ENCODE measurements at regions of chr6 and their contacts with region 1.

Region 1: DNA sequence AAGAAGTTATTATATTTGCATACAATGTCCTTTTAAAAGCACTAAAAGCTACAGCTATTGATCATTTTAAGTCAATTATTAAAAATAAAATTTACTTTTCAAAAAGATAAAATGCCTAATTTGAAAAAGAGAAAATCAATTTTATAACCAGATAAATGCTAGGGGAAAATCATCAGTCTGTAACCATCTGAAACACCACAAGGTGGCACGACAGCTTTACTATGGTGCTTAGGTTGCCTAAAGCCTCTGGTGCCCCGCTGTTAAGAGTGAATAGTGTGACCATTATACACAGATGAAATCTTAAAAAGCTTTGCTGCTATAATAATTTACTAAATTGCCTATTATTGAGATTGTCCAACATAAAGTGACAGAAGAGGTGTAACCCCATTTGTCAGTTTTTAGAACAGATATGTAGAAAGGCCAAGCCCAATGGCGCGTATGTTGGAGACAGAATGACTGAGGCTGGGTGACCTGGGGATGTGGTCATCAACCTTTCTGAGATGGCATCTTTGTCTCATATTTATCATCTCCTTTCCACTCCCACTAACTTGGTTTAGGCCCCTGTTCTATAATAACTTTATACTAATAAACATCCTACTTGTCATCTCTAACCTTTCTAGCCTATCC is 100.8 kb downstream of the MOXD1 start:
- DNase-seq: no peak
- H3K4me3 Mint-ChIP-seq: no peak overlapping the region
- H3K27ac Mint-ChIP-seq: no peak overlapping the region
- H3K4me1 Mint-ChIP-seq: no peaks in the 10 kb centered on the region
- H3K27me3 Mint-ChIP-seq: peaks cover 19% of the 10 kb centered on the region

Region 2: DNA sequence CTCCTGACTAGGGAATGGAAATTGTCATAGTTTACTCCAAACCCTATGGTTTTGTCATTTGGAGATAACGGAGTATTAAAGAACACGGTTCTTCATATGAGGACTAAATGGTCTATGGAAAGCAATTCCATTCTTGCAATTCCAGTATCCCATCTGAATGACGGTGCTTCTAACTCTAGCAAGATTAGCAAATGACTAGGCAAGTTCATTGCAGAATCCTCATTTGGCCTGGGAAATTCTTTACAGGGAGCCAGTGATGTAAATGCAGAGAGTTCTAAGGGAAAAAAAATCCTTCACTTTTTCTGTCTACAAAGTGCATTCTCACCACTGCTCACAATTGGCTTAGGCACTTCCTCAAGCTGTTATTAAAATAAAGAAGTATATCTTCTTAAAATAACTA is 10.7 kb before region 1 on chr6:
- CTCF ChIA-PET with region 1: interaction called, 14 read pairs
- POLR2A ChIA-PET with region 1: no interaction called
- DNase-seq: no peak
- H3K4me3 Mint-ChIP-seq: no peak overlapping the region
- H3K27ac Mint-ChIP-seq: no peak overlapping the region
- H3K4me1 Mint-ChIP-seq: no peaks in the 10 kb centered on the region
- H3K27me3 Mint-ChIP-seq: peaks cover 17% of the 10 kb centered on the region

Region 3: DNA sequence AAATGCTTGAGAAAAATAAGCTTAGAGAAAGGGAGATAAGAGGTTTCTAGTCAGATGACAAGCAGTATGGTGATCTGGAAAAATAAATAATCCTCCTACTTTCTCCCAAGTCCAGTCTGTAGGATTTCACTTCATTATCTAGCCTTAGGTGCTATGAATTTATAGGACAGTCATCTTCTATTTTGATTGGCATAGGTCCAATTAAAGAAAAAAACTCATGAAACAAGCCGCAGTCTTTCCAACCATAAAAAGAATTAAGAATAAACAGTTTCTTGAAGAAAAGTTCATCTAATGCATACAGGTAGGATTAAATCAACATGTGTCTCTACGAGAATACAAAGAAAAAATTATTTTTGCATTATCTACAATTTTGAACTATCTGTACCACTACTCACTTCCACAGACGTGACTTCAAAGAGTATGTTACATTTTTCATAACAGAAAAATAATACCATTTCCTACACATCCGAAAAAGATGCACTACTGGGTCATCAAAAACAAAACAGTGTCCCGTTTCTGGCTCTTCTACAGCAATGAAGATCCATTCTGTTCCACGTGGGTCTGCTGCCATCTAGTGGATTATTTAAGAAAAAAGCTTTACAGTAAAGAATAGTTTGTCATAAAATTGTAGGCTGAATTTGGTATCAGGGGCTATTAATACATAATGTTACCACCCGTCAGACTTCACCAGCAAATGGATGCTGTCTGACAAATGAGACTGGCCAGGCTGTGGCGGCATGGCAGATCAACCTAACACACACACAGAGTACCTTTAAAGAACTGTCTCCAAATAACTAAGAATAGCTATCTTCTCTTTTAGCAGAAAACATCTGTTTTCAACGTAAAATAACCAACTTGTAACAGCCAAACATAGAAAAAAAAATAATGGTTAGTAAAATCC is 183.6 kb after region 1 on chr6:
- CTCF ChIA-PET with region 1: interaction called, 25 read pairs
- POLR2A ChIA-PET with region 1: no interaction called
- DNase-seq: peak; percentile 33
- H3K4me3 Mint-ChIP-seq: no peak overlapping the region
- H3K27ac Mint-ChIP-seq: no peak overlapping the region
- H3K4me1 Mint-ChIP-seq: peaks cover 22% of the 10 kb centered on the region
- H3K27me3 Mint-ChIP-seq: no peaks in the 10 kb centered on the region

Measured in activated CD4-positive, alpha-beta memory T cell treated with anti-CD3 and anti-CD28 coated beads, Interleukin-2, amount 10 ng/mL, durations not matched to agents 7 days and 5 days (primary cell).